Heart left ventricle (tissue), 16 donors: ENCODE measurements at regions of chr1 and their contacts with region 1.

Region 1: GRCh38 chr1:3170561-3171453 is 101.8 kb downstream of the PRDM16 start:
- DNase-seq: peak; percentile 85 to 92 (median 85)
- ATAC-seq: peak; percentile 82 to 92 (median 87)
- H3K4me3 ChIP-seq: peak overlapping the region in 11 of 12 donors; percentile 22 to 58 (median 44)
- H3K27ac ChIP-seq: peak overlapping the region; percentile 71 to 98 (median 89)
- H3K4me1 ChIP-seq: peaks cover 7 to 73% (median 53%) of the 10 kb centered on the region in 12 donors
- H3K27me3 ChIP-seq: peaks cover 0 to 4% (median 0%) of the 10 kb centered on the region in 9 donors
- CTCF ChIP-seq: no peak
- POLR2A ChIP-seq: no peak

Region 2: DNA sequence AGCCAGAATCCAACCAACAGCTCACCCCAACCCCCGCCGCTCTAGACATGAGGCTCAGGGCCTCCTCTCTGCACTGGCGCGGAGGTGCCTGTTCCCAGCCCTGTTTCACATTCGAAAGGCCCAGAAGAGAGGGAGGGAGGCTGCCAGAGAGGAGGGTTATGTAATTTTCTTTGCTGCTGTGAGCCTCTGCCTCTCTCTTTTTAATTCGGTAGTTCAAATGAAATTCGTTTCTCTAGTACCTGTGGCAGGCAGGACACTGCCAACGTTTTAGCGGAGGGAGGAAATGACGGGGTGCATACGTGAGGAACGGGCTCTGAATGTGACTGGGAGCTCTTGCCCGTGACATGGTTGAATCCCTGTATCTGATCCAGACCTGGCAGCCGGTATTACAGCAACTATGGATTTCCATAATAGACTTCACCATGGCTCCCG is 92.4 kb before region 1 on chr1:
- intact Hi-C with region 1: loop called in 3 of 10 experiments (anchors 5 to 10 kb)
- DNase-seq: peak in 1 of 5 donors; percentile 56
- ATAC-seq: peak; percentile 16 to 51 (median 33)
- H3K4me3 ChIP-seq: no peak overlapping the region
- H3K27ac ChIP-seq: peak overlapping the region in 11 of 12 donors; percentile 13 to 82 (median 61)
- H3K4me1 ChIP-seq: peaks cover 0 to 80% (median 27%) of the 10 kb centered on the region in 12 donors
- H3K27me3 ChIP-seq: peaks cover 0 to 27% (median 4%) of the 10 kb centered on the region in 9 donors
- CTCF ChIP-seq: no peak
- POLR2A ChIP-seq: no peak

Region 3: DNA sequence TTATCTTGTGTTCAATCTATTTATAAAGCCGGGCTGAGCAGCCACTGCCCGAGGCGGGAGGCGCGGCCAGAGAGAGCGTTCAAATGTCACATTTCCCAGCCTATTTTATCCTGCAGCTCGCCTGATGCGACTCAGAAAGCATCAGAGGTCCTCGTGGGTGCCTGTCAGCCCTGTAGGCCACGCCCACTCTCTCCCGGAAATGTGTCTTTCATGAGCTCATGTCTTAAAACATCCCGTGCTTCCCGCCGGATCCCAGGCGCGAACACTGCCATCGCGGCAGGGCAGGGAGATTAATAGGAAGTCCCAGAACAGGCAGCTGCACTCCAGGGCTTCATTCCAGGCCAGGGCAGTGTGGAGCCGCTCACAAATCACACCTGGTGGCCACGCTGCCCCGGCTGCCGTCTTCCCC is 15.7 kb after region 1 on chr1:
- intact Hi-C with region 1: loop called in 1 of 10 experiments (anchors 2 kb)
- DNase-seq: peak in 4 of 5 donors; percentile 84 to 92 (median 89)
- ATAC-seq: peak; percentile 61 to 90 (median 76)
- H3K4me3 ChIP-seq: peak overlapping the region in 1 of 12 donors; percentile 10
- H3K27ac ChIP-seq: peak overlapping the region; percentile 12 to 92 (median 76)
- H3K4me1 ChIP-seq: peaks cover 0 to 43% (median 25%) of the 10 kb centered on the region in 12 donors
- H3K27me3 ChIP-seq: peaks cover 0 to 20% (median 0%) of the 10 kb centered on the region in 9 donors
- CTCF ChIP-seq: no peak
- POLR2A ChIP-seq: no peak

Region 4: DNA sequence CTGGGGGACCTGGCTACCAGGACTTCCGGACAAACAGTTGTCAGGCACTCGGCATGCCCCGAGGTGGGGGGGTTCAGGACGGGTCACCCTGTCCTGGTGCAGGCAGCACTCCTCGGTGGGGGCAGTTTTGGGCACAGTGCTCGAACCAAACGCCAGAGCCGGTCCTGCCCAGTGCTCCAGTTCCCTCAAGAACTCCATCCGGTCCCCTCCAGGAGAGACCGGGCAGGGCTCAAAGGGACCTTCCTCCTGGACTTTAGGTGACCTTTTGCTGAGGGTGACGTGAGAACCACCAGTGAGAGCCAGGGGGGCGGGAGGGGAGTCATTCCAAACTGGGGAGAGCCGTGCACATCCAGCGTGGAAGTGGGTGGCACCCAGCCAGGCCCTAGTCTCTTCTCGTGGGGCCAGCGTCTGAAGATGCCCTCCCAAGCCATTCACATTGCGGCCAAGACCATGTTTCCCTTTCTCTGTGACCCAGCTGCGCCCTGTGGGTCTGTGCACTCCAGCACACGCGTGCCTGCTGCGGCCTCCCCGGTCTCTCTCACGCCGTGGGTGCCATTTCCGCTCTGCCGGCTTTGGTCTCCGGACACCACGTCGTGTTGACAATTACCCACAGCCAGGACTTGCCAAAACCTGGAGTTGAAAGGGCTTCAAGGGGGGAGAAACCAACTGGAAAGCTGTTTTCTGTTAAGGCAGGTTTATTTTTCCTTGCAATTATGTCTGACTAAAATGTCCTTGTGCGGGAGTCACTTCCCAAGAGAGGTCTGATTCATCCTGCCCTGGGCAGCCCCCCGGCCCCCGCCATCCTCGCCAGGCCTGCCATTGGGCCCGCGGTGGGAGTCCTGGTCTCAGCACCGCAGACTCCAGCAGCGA is 104.9 kb after region 1 on chr1:
- intact Hi-C with region 1: loop called in 3 of 10 experiments (anchors 5 to 10 kb)
- DNase-seq: peak in 2 of 5 donors; percentile 54 to 57
- ATAC-seq: peak; percentile 32 to 72 (median 50)
- H3K4me3 ChIP-seq: no peak overlapping the region
- H3K27ac ChIP-seq: peak overlapping the region in 7 of 12 donors; percentile 15 to 68 (median 33)
- H3K4me1 ChIP-seq: peaks cover 0 to 36% (median 6%) of the 10 kb centered on the region in 12 donors
- H3K27me3 ChIP-seq: no peaks in the 10 kb centered on the region
- CTCF ChIP-seq: no peak
- POLR2A ChIP-seq: no peak